OCI-LY7 (cell line): ENCODE measurements at regions of chr9 and their contacts with region 1.

Region 1: DNA sequence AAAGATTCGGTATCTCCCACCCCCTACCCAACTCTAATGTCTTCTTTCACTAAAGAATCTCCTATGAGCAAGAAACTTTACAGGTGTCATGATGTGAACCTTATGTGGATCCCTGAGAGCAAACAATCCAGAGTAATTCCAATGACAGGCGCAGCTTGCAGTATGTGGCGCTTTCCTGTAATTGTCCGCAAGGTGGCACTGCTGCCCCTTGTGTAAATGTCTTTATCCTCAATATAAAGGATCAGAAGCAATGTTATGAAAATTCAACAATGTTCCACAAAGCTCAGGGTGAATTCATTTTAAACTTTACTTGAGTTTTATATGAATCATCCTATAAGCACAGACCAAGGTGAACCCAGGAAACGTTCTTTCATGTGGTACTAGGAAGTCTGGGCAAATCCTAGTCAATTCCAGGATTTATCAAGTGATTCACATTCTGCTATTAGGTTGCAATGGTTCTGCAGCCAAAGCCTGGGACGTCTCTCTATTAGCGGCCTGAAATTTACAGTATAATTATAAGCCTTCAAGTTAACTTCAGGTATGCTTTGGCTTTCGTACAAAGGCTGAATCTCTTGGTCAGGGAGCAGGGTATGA is 113.7 kb downstream of the TRPM6 start:
- DNase-seq: peak; percentile 77
- H3K4me3 ChIP-seq: no peak overlapping the region
- H3K27ac ChIP-seq: no peak overlapping the region
- H3K4me1 ChIP-seq: no peaks in the 10 kb centered on the region
- CTCF ChIP-seq: peak; percentile 98

Region 2: DNA sequence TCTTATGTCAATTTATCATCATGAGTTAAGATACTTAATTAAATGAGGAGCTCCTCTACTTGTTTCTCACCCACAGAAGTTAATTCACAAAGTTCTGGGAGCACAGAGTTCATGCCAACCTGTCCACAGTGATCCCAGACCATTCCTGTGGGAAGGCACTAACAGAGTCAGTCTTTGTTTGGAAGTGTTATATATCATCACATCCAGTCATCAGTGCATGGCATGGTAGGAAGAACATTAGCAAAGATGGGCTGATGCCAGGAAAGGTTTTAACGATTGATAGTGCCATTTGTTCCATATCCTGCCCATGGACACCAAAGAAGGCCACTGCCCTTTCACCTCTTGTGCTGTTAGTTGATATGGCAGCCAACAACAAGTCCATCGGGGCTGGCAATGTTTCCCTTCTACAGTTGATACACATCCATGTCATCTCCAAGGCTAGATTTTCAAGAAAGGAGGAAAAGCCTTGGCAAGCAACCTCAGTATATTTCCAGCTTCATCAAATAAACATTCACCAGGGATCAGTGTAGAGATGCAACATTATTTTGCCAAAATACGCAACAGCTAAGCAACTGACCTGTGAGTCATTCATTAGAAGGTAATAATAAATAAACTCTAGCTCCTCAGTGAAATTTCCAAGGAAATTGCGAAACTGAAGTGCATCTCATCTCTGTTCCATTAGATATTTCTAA is 107.2 kb before region 1 on chr9:
- CTCF ChIA-PET with region 1: no interaction called
- POLR2A ChIA-PET with region 1: no interaction called
- intact Hi-C with region 1: no loop called
- DNase-seq: no peak
- H3K4me3 ChIP-seq: no peak overlapping the region
- H3K27ac ChIP-seq: no peak overlapping the region
- H3K4me1 ChIP-seq: no peaks in the 10 kb centered on the region
- CTCF ChIP-seq: no peak

Region 3: GRCh38 chr9:74691058-74691457 is 82.9 kb before region 1 on chr9:
- CTCF ChIA-PET with region 1: no interaction called
- POLR2A ChIA-PET with region 1: no interaction called
- intact Hi-C with region 1: no loop called
- DNase-seq: no peak
- H3K4me3 ChIP-seq: no peak overlapping the region
- H3K27ac ChIP-seq: no peak overlapping the region
- H3K4me1 ChIP-seq: no peaks in the 10 kb centered on the region
- CTCF ChIP-seq: no peak

Region 4: DNA sequence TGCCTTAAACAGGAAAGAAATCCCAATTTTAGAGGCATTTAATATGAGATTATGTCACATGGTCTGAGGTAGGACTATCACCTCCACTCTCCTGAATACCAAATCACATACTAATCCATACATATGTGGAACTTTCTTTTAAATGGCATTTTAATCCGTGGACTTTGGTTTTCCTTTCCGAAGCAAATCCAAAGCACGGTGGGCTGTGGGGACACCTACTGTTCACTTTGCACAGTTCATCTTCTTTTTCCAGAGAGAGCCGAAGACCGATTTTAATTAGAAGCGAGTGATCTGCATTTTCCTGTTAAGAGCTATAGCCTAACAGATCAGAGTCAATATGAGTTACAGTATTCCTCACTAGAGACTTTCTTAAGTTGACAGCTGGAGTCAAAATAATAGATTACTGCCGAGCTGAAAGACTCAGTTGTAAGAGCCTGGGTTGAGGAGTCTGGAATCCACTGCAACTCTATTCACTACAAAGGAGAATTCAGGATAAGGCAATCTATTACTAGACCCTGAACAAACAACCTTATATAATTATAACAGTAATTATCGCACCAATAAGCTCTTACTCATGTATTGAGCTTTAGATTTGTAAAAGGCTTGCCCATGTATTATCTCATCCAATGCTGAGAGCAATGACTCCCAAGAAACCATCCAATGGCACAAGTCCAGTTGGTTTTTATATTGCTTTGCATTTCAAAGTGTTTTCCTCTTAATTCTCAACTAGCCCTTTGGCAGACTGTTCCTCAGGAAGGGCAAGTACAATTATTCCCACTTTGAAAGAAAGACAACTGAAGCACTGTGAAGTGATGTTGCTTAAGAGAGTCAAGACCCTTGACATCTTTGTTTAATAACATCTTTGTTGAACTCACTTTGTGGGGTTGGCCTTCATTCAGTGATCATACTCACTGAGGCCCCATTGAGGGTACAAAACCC is 30.9 kb before region 1 on chr9:
- CTCF ChIA-PET with region 1: no interaction called
- POLR2A ChIA-PET with region 1: no interaction called
- intact Hi-C with region 1: no loop called
- DNase-seq: no peak
- H3K4me3 ChIP-seq: no peak overlapping the region
- H3K27ac ChIP-seq: no peak overlapping the region
- H3K4me1 ChIP-seq: no peaks in the 10 kb centered on the region
- CTCF ChIP-seq: peak; percentile 78

Region 5: GRCh38 chr9:75001719-75002422 is 227.9 kb after region 1 on chr9:
- CTCF ChIA-PET with region 1: no interaction called
- POLR2A ChIA-PET with region 1: no interaction called
- intact Hi-C with region 1: loop called (anchors 1 kb)
- DNase-seq: peak; percentile 84
- H3K4me3 ChIP-seq: no peak overlapping the region
- H3K27ac ChIP-seq: no peak overlapping the region
- H3K4me1 ChIP-seq: no peaks in the 10 kb centered on the region
- CTCF ChIP-seq: peak; percentile 90

Region 6: GRCh38 chr9:75185585-75186170 is 411.7 kb after region 1 on chr9:
- CTCF ChIA-PET with region 1: no interaction called
- POLR2A ChIA-PET with region 1: no interaction called
- intact Hi-C with region 1: loop called (anchors 5 kb)
- DNase-seq: peak; percentile 56
- H3K4me3 ChIP-seq: no peak overlapping the region
- H3K27ac ChIP-seq: no peak overlapping the region
- H3K4me1 ChIP-seq: no peaks in the 10 kb centered on the region
- CTCF ChIP-seq: peak; percentile 87